PC-3 (cell line): ENCODE measurements at regions of chr12 and their contacts with region 1.

Region 1: GRCh38 chr12:63917864-63918799 is 73.6 kb downstream of the SRGAP1 start:
- DNase-seq: peak; percentile 99
- ATAC-seq: peak; percentile 68
- H3K4me3 ChIP-seq: peak overlapping the region; percentile 55
- H3K27ac ChIP-seq: peak overlapping the region; percentile 99
- H3K4me1 ChIP-seq: peaks cover 74% of the 10 kb centered on the region
- H3K27me3 ChIP-seq: no peaks in the 10 kb centered on the region
- CTCF ChIP-seq: no peak

Region 2: DNA sequence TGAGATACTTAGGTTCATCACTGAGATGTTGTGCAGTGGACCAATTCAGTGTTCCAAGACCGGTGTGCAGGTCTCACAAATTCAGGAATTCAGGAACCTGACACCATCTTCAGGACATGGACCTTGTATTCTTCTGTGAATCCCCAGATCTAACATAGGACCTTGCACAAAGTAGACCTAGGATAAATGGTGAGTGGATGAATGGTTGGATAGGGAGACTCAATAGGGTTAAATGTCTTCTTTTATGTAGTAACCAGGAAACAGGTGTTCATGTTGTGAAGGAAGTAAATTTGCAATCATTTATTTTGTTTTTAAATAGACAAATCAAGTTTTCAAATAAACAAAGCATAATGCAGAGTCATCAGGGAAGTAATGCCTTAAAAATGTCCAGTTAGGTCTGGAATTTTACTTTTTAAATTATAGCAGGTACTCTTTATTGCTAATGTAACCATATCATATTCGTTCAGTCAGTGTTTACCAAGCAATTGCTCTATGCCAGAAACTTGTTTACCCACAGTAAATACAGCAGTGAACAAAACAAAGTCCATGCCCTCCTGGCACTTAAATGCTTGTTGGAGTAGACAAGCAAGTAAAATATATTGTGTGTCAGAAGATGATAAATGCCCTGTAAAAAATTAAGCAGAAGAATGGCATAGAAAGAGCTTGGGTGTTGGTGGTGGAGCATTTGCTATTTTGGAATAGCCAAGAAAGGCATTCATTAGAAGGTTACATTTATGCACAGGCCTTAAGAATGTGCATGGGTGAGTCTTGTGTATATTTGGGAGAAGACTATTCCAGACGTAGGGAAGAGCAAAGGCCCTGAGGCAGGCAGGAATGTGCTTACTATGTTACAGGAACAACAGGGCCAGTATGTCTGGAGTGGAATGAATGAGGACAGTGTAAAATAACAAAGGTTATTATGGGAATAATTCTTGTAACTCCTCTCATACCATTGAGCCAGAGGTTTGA is 112.1 kb before region 1 on chr12:
- CTCF ChIA-PET with region 1: no interaction called
- POLR2A ChIA-PET with region 1: no interaction called
- intact Hi-C with region 1: no loop called
- DNase-seq: peak; percentile 65
- ATAC-seq: peak; percentile 92
- H3K4me3 ChIP-seq: no peak overlapping the region
- H3K27ac ChIP-seq: peak overlapping the region; percentile 32; the same call in 1 of the 2 replicates
- H3K4me1 ChIP-seq: peaks cover 24% of the 10 kb centered on the region
- H3K27me3 ChIP-seq: no peaks in the 10 kb centered on the region
- CTCF ChIP-seq: no peak

Region 3: DNA sequence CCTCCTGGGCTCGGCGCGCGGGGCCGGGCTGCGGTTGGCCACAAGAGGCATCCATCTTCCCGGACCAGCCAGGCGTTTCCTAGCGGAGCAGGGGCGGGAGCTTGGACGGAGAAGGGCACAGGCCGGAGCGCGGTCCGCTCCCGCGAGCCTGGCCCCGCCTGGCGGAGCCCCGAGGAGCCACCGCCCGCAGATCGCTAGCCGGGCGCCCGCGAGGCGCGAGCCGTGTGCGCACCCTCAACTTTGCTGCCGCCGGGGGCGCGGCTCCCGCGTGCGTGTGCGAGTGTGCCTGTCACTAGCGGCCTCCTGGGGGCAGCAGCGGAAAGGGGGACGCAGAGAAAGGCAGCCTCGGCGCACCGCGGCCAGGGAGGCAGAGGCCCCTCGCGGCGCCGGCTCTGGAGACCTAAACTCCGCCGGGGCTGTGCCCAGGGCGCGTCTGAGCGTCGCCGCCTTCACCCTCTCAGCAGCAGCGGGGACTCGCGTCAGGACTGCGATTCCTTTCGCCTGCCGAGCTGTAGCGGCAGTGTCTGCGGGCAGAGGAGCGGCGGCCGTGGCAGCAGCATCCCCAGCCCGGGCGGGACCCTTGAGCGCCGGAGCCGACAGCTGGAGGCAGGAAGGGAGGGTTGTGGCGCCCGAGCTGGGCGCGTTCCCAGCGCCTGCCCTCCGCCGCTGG is 74.3 kb before region 1 on chr12:
- CTCF ChIA-PET with region 1: no interaction called
- POLR2A ChIA-PET with region 1: interaction called, 3 read pairs
- intact Hi-C with region 1: loop called (anchors 1 kb)
- DNase-seq: peak; percentile 96
- ATAC-seq: peak; percentile 81
- H3K4me3 ChIP-seq: peak overlapping the region; percentile 89
- H3K27ac ChIP-seq: peak overlapping the region; percentile 61
- H3K4me1 ChIP-seq: peaks cover 14% of the 10 kb centered on the region
- H3K27me3 ChIP-seq: no peaks in the 10 kb centered on the region
- CTCF ChIP-seq: peak; percentile 85

Region 4: GRCh38 chr12:63901004-63901799 is 16.9 kb before region 1 on chr12:
- CTCF ChIA-PET with region 1: interaction called, 4 read pairs
- POLR2A ChIA-PET with region 1: interaction called, 3 read pairs
- intact Hi-C with region 1: loop called (anchors 2 kb)
- DNase-seq: peak; percentile 93
- ATAC-seq: peak; percentile 87
- H3K4me3 ChIP-seq: peak overlapping the region; percentile 29; the same call in 1 of the 2 replicates
- H3K27ac ChIP-seq: peak overlapping the region; percentile 94
- H3K4me1 ChIP-seq: peaks cover 47% of the 10 kb centered on the region
- H3K27me3 ChIP-seq: no peaks in the 10 kb centered on the region
- CTCF ChIP-seq: no peak

Region 5: DNA sequence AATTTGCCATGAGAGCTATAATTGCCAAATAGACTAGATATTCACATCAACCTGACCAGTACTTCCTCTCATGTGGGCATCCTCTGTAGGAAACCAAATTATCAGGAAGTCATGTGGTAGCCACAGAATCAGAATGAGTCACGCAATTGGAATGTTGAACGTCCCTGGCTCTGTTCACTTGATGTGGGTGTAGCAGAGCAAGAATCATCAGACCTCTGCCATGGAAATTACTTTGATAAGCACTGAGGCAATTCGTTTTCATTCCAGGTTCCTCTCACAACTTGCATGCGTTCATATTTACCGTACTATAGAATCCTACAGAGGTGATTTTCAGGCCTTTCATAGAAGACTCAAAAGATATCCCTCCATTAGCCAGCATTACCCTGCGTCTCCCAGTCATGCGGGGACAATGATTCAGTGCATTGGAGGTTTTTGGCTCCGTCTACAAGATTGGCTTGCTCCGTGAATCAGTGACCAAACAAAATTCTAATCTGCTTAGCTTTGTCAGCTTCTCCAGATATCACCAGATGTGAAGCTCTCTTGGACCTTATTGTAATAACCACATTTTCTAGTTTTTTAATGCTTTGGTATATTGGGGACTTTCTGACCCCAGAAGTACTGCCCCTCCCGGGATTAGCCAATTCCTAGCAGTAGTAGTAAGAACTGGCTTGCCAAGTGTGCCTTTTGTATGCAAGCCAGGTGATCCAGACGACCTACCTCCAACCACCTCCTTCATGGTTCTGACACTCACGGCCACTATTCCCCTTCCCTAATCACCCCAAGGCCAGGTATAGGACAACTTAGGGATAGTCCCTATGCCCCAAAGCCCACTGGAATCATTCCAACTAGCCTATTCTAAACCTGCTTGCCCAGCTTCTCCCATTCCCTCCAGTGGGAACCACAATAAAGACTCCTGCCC is 170.6 kb after region 1 on chr12:
- CTCF ChIA-PET with region 1: no interaction called
- POLR2A ChIA-PET with region 1: no interaction called
- intact Hi-C with region 1: loop called (anchors 5 kb)
- DNase-seq: peak; percentile 98
- ATAC-seq: peak; percentile 96
- H3K4me3 ChIP-seq: peak overlapping the region; percentile 39
- H3K27ac ChIP-seq: peak overlapping the region; percentile 78
- H3K4me1 ChIP-seq: peaks cover 42% of the 10 kb centered on the region
- H3K27me3 ChIP-seq: no peaks in the 10 kb centered on the region
- CTCF ChIP-seq: no peak

Region 6: DNA sequence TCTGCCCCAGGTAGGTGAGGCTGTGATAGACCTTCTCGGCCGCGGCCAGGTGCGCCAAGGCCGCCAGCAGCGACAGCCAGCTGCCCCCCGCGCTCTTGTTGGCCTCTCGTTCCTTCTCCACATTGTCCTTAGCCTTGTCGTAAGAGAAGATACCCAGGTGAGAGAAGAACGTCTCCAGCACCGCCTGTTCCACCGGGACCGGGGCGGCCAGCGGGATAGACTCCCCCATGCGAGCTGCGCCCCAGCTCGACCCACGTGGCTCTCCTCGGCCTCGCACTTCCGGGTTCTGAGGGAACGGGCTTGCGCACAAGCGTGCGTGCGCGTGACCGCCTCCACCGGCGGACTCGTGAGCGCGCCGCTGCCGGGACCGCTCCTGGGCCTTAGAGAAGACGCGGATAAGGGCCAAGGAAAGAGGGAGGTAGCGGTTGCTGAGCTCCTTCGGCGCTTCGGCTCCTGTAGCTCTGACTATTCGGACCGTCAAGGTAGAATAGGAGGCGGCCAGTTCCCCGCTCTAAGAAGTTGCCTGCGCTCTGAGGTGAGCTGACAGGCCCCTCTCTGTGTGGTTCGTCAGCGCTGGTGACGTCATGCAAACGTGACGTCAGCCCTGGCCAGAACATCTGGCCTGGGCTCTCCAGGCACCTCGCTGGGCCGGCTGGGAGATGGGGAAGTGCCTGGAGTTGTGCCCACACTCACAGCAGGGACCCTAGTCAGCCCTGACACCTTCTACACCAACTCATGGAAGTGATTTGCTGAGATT is 304.1 kb after region 1 on chr12 and contains the start of gene KICS2:
- CTCF ChIA-PET with region 1: no interaction called
- POLR2A ChIA-PET with region 1: no interaction called
- intact Hi-C with region 1: loop called (anchors 1 kb)
- DNase-seq: peak; percentile 95
- ATAC-seq: peak; percentile 93
- H3K4me3 ChIP-seq: peak within 1 kb of the TSS; percentile 78
- H3K27ac ChIP-seq: peak within 1 kb of the TSS; percentile 83
- H3K4me1 ChIP-seq: peaks cover 14% of the 10 kb centered on the region
- H3K27me3 ChIP-seq: no peaks in the 10 kb centered on the region
- CTCF ChIP-seq: no peak
- total RNA-seq, gene KICS2: 11.9 and 16.4 TPM in 2 replicates